Endothelial cell of umbilical vein (primary cell): ENCODE measurements at regions of chr20 and their contacts with region 1.

Region 1: DNA sequence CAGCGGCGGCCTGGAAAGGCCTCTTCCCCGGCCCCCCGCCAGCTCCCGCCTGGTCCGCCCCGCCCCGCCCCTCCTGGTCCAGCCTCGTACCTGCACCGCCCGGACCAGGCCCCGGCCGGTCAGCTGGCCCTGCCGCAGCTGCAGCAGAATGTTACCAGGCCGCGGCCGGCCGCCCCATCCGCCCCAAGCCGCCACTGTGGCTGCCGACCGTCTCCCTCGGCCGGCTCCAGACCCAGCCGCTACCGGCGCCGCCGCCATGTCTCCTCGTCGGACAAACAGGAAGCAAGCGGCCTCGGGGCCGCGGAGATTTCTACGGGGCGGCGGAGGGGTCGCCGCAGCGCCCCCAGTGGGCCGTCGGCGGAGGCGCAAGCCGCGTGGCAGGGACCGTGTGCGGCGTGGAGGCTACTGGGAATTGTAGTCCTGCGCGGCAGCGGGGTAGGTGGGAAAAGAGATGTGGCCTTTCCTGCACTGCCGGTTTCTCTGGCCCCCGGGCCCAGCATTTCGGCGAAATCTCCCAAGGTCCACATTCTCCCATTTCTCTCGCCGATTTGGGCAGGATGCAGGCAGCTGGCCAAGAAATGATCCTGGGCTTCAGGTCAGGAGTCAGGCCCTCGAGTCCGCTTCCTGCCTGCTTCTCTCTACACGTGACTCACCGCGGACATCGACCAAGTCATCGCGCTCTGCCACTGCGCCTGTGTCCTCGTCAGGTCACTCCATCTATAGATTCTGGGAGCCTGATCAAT is at the start of gene TRPC4AP:
- DNase-seq: peak; percentile 94
- H3K4me3 ChIP-seq: peak within 1 kb of the TSS; percentile 46 to 98 (median 66)
- H3K27ac ChIP-seq: peak within 1 kb of the TSS; percentile 88
- H3K4me1 ChIP-seq: peaks cover 42% of the 10 kb centered on the region
- H3K27me3 ChIP-seq: no peaks in the 10 kb centered on the region
- CTCF ChIP-seq: peak; percentile 97 to 100
- POLR2A ChIP-seq: peak; percentile 94
- total RNA-seq, gene TRPC4AP: 88.3 and 89.0 TPM in 2 replicates

Region 2: DNA sequence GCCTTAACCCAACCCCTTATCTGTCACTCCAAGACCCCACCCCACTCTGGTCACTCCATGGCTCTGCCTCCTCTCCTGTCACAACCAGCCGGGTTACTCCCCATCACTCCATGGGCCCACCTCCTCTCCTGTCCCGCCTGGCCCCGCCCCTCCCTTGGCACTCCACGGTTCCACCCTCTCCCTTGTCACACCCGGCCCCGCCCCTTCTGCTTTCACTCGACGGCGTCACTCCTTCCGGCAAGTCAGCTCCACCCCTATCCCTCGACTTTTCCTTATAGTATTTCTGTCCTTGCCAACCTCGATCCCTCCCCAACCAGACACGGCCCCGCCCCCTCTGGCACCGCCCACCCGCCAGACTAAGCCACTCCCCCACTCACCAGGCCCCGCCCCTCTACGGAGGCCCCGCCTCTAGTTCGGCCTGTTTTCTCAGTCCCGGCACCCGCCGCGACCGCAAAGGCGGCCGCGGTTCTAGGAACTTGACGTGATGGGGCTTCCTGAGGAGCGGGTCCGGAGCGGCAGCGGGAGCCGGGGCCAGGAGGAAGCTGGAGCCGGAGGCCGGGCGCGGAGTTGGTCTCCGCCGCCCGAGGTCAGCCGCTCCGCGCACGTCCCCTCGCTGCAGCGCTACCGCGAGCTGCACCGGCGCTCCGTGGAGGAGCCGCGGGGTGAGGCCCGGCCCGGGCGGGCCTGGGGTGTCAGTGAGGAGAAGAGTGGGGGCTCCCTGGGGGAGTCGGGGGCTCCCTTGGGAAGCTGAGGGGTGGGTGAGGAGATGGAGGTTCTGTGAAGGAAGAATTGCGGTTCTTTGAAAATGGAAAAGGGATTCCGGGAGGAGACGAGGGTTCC is 216.3 kb before region 1 on chr20 and contains the start of gene ACSS2:
- CTCF ChIA-PET with region 1: interaction called, 8 read pairs
- POLR2A ChIA-PET with region 1: no interaction called
- dilution Hi-C with region 1: no loop called
- intact Hi-C with region 1: loop called (anchors 2 kb)
- DNase-seq: peak; percentile 99
- H3K4me3 ChIP-seq: peak within 1 kb of the TSS; percentile 72 to 89 (median 89)
- H3K27ac ChIP-seq: peak within 1 kb of the TSS; percentile 6
- H3K4me1 ChIP-seq: peaks cover 12% of the 10 kb centered on the region
- H3K27me3 ChIP-seq: no peaks in the 10 kb centered on the region
- CTCF ChIP-seq: no peak
- POLR2A ChIP-seq: peak; percentile 79
- total RNA-seq, gene ACSS2: 40.7 and 48.5 TPM in 2 replicates

Region 3: GRCh38 chr20:35104685-35105295 is 12.1 kb after region 1 on chr20:
- CTCF ChIA-PET with region 1: interaction called, 13 read pairs
- POLR2A ChIA-PET with region 1: no interaction called
- dilution Hi-C with region 1: no loop called
- intact Hi-C with region 1: no loop called
- DNase-seq: no peak
- H3K4me3 ChIP-seq: no peak overlapping the region
- H3K27ac ChIP-seq: no peak overlapping the region
- H3K4me1 ChIP-seq: no peaks in the 10 kb centered on the region
- H3K27me3 ChIP-seq: no peaks in the 10 kb centered on the region
- CTCF ChIP-seq: no peak
- POLR2A ChIP-seq: no peak

Region 4: DNA sequence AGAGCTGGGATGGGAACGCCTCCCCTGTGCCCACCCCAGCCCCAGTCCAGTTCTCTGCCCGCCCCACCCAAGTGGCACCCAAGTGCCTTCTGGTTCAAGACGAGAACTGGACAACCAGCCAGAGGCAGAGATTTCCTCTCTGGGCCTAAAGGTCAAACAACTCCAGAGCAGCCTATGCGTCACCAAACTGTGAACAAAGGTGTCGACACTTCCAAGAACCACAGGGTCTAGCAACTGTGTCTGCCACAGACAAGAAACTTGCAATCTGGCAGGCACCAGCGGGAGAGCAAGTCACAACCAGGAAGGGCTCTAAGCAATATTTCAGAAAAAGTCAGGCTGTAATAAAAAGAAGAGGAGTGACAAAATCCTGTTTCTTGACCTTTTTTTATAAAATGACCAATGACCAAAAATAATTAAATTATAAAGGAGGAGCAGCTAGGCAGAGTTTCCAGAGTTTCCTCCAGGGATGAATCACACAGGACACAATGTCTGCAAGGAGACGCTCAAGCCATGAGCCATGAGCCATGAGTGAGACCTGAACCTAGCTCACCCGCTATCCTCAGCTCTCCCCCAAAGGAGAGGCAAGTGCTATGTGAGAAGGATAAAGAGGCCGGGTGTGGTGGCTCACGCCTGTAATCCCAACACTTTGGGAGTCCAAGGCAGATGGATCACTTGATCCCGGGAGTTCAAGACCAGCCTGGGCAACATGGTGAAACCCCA is 43.3 kb after region 1 on chr20:
- CTCF ChIA-PET with region 1: interaction called, 277 read pairs
- POLR2A ChIA-PET with region 1: no interaction called
- dilution Hi-C with region 1: no loop called
- intact Hi-C with region 1: loop called (anchors 2 kb)
- DNase-seq: peak; percentile 88
- H3K4me3 ChIP-seq: no peak overlapping the region
- H3K27ac ChIP-seq: peak overlapping the region; percentile 97
- H3K4me1 ChIP-seq: peaks cover 34% of the 10 kb centered on the region
- H3K27me3 ChIP-seq: no peaks in the 10 kb centered on the region
- CTCF ChIP-seq: no peak
- POLR2A ChIP-seq: peak; percentile 33

Region 5: GRCh38 chr20:35200255-35200654 is 107.6 kb after region 1 on chr20:
- CTCF ChIA-PET with region 1: interaction called, 10 read pairs
- POLR2A ChIA-PET with region 1: no interaction called
- dilution Hi-C with region 1: no loop called
- intact Hi-C with region 1: no loop called
- DNase-seq: no peak
- H3K4me3 ChIP-seq: no peak overlapping the region
- H3K27ac ChIP-seq: no peak overlapping the region
- H3K4me1 ChIP-seq: peaks cover 6% of the 10 kb centered on the region
- H3K27me3 ChIP-seq: no peaks in the 10 kb centered on the region
- CTCF ChIP-seq: no peak
- POLR2A ChIP-seq: no peak

Region 6: GRCh38 chr20:35269055-35269781 is 176.5 kb after region 1 on chr20:
- CTCF ChIA-PET with region 1: interaction called, 118 read pairs
- POLR2A ChIA-PET with region 1: no interaction called
- dilution Hi-C with region 1: no loop called
- intact Hi-C with region 1: loop called (anchors 1 kb)
- DNase-seq: peak; percentile 66
- H3K4me3 ChIP-seq: no peak overlapping the region
- H3K27ac ChIP-seq: no peak overlapping the region
- H3K4me1 ChIP-seq: no peaks in the 10 kb centered on the region
- H3K27me3 ChIP-seq: no peaks in the 10 kb centered on the region
- CTCF ChIP-seq: peak; percentile 87 to 95
- POLR2A ChIP-seq: no peak

Region 7: GRCh38 chr20:35368666-35369423 is 276.1 kb after region 1 on chr20:
- CTCF ChIA-PET with region 1: no interaction called
- POLR2A ChIA-PET with region 1: no interaction called
- dilution Hi-C with region 1: no loop called
- intact Hi-C with region 1: no loop called
- DNase-seq: no peak
- H3K4me3 ChIP-seq: no peak overlapping the region
- H3K27ac ChIP-seq: no peak overlapping the region
- H3K4me1 ChIP-seq: no peaks in the 10 kb centered on the region
- H3K27me3 ChIP-seq: no peaks in the 10 kb centered on the region
- CTCF ChIP-seq: no peak
- POLR2A ChIP-seq: no peak